ENCODE measurements at regions of chr17 and their contacts with region 1.

Region 1: GRCh38 chr17:1908699-1909309 is 79.0 kb downstream of the RPA1 start:
- DNase-seq: peak; percentile 14
- H3K4me3 ChIP-seq: no peak overlapping the region; the same call in 1 of the 2 replicates
- H3K27me3 ChIP-seq: peaks cover 26% of the 10 kb centered on the region
- CTCF ChIP-seq: peak; percentile 79

Region 2: DNA sequence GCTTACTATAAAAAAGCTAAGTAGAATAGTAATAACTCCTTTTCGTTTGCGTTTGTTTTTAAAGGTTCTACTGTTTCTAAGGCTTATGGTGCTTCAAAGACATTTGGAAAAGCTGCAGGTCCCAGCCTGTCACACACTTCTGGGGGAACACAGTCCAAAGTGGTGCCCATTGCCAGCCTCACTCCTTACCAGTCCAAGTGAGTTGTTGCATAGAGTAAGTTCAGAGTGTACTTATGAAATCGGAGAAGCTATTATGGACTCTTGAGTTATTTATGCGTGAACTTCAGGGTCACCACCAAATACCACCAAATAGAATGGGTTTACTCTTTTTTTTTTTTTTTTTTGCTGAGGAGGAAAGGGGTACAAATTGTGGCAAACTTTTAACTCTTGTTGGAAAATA is 33.2 kb before region 1 on chr17:
- CTCF ChIA-PET with region 1: no interaction called
- POLR2A ChIA-PET with region 1: no interaction called
- DNase-seq: no peak
- H3K4me3 ChIP-seq: no peak overlapping the region
- H3K27me3 ChIP-seq: no peaks in the 10 kb centered on the region
- CTCF ChIP-seq: no peak

Region 3: GRCh38 chr17:2011411-2012371 is 102.9 kb after region 1 on chr17:
- CTCF ChIA-PET with region 1: interaction called, 12 read pairs
- POLR2A ChIA-PET with region 1: no interaction called
- DNase-seq: no peak
- H3K4me3 ChIP-seq: no peak overlapping the region
- H3K27me3 ChIP-seq: peaks cover 2% of the 10 kb centered on the region; the same call in 1 of the 2 replicates
- CTCF ChIP-seq: no peak

Measured in BJ (cell line).